ENCODE measurements at regions of chr20 and their contacts with region 1.

Region 1: GRCh38 chr20:6708010-6708409 is 59.5 kb upstream of the BMP2 start:
- DNase-seq: peak; percentile 52 to 84
- ATAC-seq: peak; percentile 49
- H3K4me3 ChIP-seq: no peak overlapping the region
- H3K27ac ChIP-seq: no peak overlapping the region
- H3K4me1 ChIP-seq: peaks cover 2 to 6% of the 10 kb centered on the region in 2 donors
- H3K27me3 ChIP-seq: no peaks in the 10 kb centered on the region

Region 2: GRCh38 chr20:6265204-6265904 is 442.7 kb before region 1 on chr20:
- intact Hi-C with region 1: loop called in 1 of 2 experiments (anchors 10 kb)
- DNase-seq: no peak
- ATAC-seq: peak; percentile 67
- H3K4me3 ChIP-seq: peak overlapping the region in 1 of 2 donors; percentile 72
- H3K27ac ChIP-seq: no peak overlapping the region
- H3K4me1 ChIP-seq: no peaks in the 10 kb centered on the region
- H3K27me3 ChIP-seq: no peaks in the 10 kb centered on the region

Region 3: GRCh38 chr20:6784210-6784611 is 76.2 kb after region 1 on chr20:
- intact Hi-C with region 1: no loop called
- DNase-seq: no peak
- ATAC-seq: no peak
- H3K4me3 ChIP-seq: no peak overlapping the region
- H3K27ac ChIP-seq: no peak overlapping the region
- H3K4me1 ChIP-seq: no peaks in the 10 kb centered on the region
- H3K27me3 ChIP-seq: no peaks in the 10 kb centered on the region

Measured in aorta (tissue), 5 donors.